GM12878 (cell line): ENCODE measurements at regions of chr19 and their contacts with region 1.

Region 1: DNA sequence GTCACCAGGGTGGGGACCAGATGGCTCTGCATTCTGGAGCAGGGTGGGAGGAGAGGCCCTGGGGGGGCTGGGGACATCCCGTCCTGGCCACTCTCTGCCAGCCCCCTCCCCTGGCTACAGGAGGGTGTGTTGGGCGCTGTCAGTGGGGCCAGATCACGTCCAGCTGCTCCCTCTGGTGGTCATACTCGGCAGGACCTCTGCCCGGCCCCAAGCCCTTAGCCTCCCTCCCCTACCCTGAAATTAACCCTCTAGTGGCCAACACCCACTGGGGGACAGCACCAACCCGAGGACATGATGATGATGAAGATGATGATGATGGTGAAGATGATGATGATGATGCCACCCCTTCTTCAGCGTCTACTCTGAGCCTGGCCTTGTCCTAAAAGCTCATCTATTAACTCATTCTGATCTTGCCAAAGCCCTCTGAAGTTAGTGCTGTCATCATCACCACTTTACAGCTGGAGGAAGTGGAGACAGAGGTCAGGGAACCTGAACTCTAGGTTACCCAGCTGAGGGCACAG is 590 bp upstream of the LGI4 start:
- DNase-seq: no peak
- ATAC-seq: peak; percentile 97
- H3K4me3 ChIP-seq: no peak overlapping the region
- H3K27ac ChIP-seq: no peak overlapping the region
- H3K4me1 ChIP-seq: peaks cover 4% of the 10 kb centered on the region; the same call in 1 of the 2 replicates
- H3K27me3 ChIP-seq: no peaks in the 10 kb centered on the region
- CTCF ChIP-seq: peak; percentile 78 to 92 (median 84)
- EP300 ChIP-seq: no peak
- POLR2A ChIP-seq: no peak
- RAD21 ChIP-seq: peak; percentile 51

Region 2: GRCh38 chr19:35114353-35115176 is 20.9 kb before region 1 on chr19:
- CTCF ChIA-PET with region 1: interaction called, 75 read pairs
- POLR2A ChIA-PET with region 1: no interaction called
- RAD21 ChIA-PET with region 1: interaction called, 8 read pairs
- SMC1A ChIA-PET with region 1: interaction called, 10 read pairs
- in situ Hi-C with region 1: no loop called
- intact Hi-C with region 1: loop called (anchors 1 kb)
- DNase-seq: no peak
- ATAC-seq: peak; percentile 95
- H3K4me3 ChIP-seq: no peak overlapping the region
- H3K27ac ChIP-seq: no peak overlapping the region
- H3K4me1 ChIP-seq: no peaks in the 10 kb centered on the region
- H3K27me3 ChIP-seq: peaks cover 0 to 2% of the 10 kb centered on the region in 2 experiments; a peak in 1 of 4 replicates
- CTCF ChIP-seq: peak; percentile 86 to 99 (median 97)
- EP300 ChIP-seq: no peak
- POLR2A ChIP-seq: no peak
- RAD21 ChIP-seq: peak; percentile 72

Region 3: DNA sequence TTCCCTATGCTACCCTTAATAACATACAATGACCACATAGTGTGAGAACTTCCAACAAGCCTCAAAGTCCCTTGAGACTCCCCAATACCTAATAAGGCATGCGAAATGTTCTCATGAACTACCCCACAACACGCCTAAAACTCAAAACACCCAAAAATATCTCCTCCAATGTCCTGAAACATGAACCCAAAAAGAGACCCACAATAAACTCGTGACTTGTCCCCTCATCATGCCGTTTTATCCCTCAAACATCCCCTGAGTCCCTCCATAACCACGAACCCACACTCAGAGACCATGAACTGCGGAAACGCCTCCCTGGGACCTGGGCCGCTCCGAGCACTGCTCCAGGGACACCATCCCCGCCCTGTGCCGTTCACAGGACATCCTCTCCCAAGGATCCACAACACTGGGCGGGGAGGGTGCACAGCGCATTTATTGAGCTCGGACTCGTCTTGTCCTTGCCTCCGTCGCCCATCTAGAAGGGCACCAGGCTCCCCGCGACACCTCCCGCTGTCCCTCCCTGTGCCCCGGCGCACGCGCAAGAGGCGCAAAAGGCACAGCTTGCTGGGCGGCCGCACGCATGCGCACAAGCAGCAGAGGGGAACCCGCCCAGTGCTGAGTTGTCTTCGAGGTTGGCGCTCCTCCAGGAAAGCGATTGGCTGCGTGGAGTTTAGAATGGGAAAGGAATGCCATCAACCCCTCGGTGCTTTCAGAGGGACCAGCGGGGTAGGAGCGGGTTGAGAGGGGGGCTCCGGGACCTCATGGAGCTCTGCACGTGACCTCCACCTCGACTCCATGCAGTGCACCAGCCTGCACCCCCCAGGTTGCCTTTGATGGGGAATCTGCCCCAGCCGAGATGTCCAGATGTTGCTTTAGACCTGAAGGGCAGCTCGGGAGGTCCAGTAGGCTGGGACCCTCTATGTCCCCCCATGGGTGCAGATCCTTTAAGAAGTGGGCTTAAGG is 11.1 kb before region 1 on chr19:
- CTCF ChIA-PET with region 1: interaction called, 75 read pairs
- POLR2A ChIA-PET with region 1: interaction called, 6 read pairs
- RAD21 ChIA-PET with region 1: interaction called, 8 read pairs
- SMC1A ChIA-PET with region 1: interaction called, 16 read pairs
- in situ Hi-C with region 1: no loop called
- intact Hi-C with region 1: no loop called
- DNase-seq: peak; percentile 76
- ATAC-seq: peak; percentile 99
- H3K4me3 ChIP-seq: peak overlapping the region; percentile 71
- H3K27ac ChIP-seq: peak overlapping the region; percentile 62
- H3K4me1 ChIP-seq: peaks cover 18% of the 10 kb centered on the region
- H3K27me3 ChIP-seq: no peaks in the 10 kb centered on the region
- CTCF ChIP-seq: no peak
- EP300 ChIP-seq: no peak
- POLR2A ChIP-seq: peak; percentile 83
- RAD21 ChIP-seq: no peak

Region 4: GRCh38 chr19:35262101-35262761 is 126.8 kb after region 1 on chr19:
- CTCF ChIA-PET with region 1: no interaction called
- POLR2A ChIA-PET with region 1: no interaction called
- RAD21 ChIA-PET with region 1: no interaction called
- SMC1A ChIA-PET with region 1: no interaction called
- in situ Hi-C with region 1: no loop called
- intact Hi-C with region 1: no loop called
- DNase-seq: no peak
- ATAC-seq: no peak
- H3K4me3 ChIP-seq: no peak overlapping the region
- H3K27ac ChIP-seq: no peak overlapping the region
- H3K4me1 ChIP-seq: no peaks in the 10 kb centered on the region
- H3K27me3 ChIP-seq: no peaks in the 10 kb centered on the region
- CTCF ChIP-seq: no peak
- EP300 ChIP-seq: no peak
- POLR2A ChIP-seq: peak; percentile 56
- RAD21 ChIP-seq: no peak